ENCODE measurements at regions of chr1 and their contacts with region 1.

Region 1: GRCh38 chr1:169240449-169241237 is 127.0 kb downstream of the NME7 start:
- DNase-seq: no peak
- H3K4me3 ChIP-seq: no peak overlapping the region
- H3K27ac ChIP-seq: no peak overlapping the region
- H3K4me1 ChIP-seq: no peaks in the 10 kb centered on the region
- H3K27me3 ChIP-seq: no peaks in the 10 kb centered on the region
- CTCF ChIP-seq: no peak

Region 2: DNA sequence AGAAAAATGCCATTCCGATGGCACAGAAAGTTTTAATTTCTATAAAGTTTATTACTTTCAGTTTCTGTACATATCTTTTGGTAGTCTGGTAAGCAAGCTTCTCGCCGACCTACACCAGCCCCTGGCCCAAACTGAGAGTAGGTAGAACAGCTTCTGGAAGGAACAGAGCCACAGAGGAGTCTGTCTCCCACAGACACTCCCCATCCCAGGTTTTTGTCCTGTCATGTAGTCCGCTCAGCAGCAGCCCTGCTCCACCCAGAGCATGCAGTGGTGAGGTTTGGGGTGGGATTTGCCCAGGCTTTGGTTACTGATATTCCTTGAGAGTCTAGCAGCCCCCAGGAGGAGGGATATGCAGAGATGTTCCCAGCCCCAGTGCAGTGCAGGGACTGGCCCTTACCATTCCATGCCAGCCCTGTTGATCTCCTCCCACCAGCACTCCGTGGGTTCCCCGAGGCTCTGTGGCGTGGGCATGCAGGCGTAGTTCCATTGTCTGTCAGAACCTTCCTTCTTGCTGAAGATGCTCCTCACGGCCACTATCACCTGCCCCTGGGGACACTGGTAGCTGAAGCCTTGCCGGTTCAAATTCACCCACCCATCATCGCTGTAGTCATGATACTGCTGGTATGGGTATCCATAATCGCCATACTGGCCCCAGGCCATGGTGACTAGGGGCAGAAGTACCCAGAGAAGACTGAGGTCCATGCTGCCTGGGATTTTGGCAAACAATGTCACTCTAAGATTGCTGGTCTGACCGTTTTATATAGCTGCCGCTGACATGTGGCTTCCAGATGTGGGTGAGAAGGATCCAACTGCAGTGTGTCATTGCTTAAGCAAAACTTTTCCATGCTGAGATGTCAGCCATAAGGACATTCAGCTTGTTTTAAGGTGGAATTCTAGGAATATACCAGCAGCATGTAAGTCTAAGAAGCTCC is 511.9 kb before region 1 on chr1 and contains the start of gene DPT:
- CTCF ChIA-PET with region 1: no interaction called
- POLR2A ChIA-PET with region 1: interaction called, 13 read pairs
- intact Hi-C with region 1: no loop called
- DNase-seq: no peak
- H3K4me3 ChIP-seq: no peak within 1 kb of the TSS
- H3K27ac ChIP-seq: no peak within 1 kb of the TSS
- H3K4me1 ChIP-seq: no peaks in the 10 kb centered on the region
- H3K27me3 ChIP-seq: no peaks in the 10 kb centered on the region
- CTCF ChIP-seq: no peak
- total RNA-seq, gene DPT: not detected in 2 replicates

Region 3: DNA sequence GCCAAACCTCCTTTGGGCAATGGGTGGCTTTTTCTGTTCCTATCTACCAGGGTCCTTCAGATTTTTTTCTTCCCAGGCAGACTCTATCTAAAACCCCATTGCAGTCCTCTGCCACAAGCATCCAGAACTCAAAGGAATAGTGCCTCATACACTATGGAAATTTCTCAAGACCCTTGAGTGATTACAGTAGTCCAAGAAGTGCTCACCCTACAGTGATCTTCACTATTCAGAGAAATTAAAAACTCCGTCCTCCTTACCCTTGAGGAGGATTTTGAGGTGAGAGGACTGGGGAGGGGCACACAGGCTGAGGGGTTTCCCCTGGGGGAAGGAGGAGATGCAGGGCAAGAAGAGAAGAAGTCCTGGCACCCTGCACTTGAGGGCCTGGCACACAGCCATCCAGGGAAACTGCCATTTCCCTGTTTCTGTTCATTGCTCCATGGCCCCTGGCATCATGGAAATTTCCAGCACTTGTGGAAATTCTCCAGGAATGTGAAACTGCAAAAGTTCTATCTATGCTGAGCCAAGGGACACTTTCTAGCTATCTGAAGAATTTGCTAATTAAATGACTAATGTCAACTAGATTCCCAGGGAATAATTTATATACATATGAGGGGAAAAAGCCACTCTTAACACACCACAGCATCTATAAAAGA is 236.7 kb before region 1 on chr1:
- CTCF ChIA-PET with region 1: no interaction called
- POLR2A ChIA-PET with region 1: no interaction called
- intact Hi-C with region 1: no loop called
- DNase-seq: peak; percentile 1 to 64
- H3K4me3 ChIP-seq: no peak overlapping the region
- H3K27ac ChIP-seq: peak overlapping the region; percentile 50
- H3K4me1 ChIP-seq: peaks cover 15% of the 10 kb centered on the region
- H3K27me3 ChIP-seq: no peaks in the 10 kb centered on the region
- CTCF ChIP-seq: no peak

Region 4: GRCh38 chr1:171055966-171056643 is 1815.5 kb after region 1 on chr1:
- CTCF ChIA-PET with region 1: no interaction called
- POLR2A ChIA-PET with region 1: interaction called, 11 read pairs
- intact Hi-C with region 1: no loop called
- DNase-seq: no peak
- H3K4me3 ChIP-seq: no peak overlapping the region
- H3K27ac ChIP-seq: no peak overlapping the region
- H3K4me1 ChIP-seq: no peaks in the 10 kb centered on the region
- H3K27me3 ChIP-seq: no peaks in the 10 kb centered on the region
- CTCF ChIP-seq: no peak

Measured in PC-9 (cell line).